Activated CD4-positive, alpha-beta T cell treated with anti-CD3 and anti-CD28 coated beads for 36 hours (primary cell): ENCODE measurements at regions of chr1 and their contacts with region 1.

Region 1: GRCh38 chr1:32307323-32307722 is 15.4 kb downstream of the HDAC1 start:
- DNase-seq: no peak
- ATAC-seq: peak; percentile 83
- H3K4me3 Mint-ChIP-seq: no peak overlapping the region
- H3K27ac Mint-ChIP-seq: peak overlapping the region; percentile 17
- H3K4me1 Mint-ChIP-seq: peaks cover 57% of the 10 kb centered on the region
- H3K27me3 Mint-ChIP-seq: no peaks in the 10 kb centered on the region

Region 2: DNA sequence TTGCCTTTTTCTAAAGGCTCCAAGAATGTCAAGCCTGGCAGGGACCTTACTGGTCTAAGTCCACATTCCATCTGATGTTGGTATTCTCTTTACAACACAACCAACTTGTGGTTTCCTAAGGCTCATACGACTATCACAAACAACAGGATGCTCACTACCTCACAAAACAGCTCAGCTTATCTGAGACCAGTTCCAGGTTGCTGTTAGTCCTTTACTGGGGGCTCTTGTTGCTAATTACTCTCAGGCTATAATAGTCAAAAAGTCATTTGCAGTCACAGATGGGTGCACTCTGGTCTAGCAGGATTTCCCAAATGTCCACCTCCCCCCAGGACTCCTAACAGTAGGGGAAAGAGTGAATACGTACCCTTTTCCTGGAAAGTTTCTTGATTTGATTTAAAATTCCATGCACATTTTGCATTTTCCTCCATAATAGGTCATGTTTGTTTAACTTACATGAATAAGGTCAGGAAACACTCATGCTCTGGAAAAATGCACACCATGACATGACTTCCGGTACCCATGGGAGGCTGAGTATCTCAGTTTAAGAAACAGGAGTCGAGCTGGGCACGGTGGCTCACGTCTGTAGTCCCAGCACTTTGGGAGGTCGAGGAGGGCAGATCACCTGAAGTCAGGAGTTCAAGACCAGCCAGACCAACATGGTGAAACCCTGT is 40.3 kb before region 1 on chr1:
- CTCF ChIA-PET with region 1: no interaction called
- POLR2A ChIA-PET with region 1: interaction called, 11 read pairs
- intact Hi-C with region 1: no loop called
- DNase-seq: peak; percentile 49
- ATAC-seq: peak; percentile 40
- H3K4me3 Mint-ChIP-seq: peak overlapping the region; percentile 36
- H3K27ac Mint-ChIP-seq: peak overlapping the region; percentile 97
- H3K4me1 Mint-ChIP-seq: peaks cover 60% of the 10 kb centered on the region
- H3K27me3 Mint-ChIP-seq: no peaks in the 10 kb centered on the region